ENCODE measurements at regions of chr16 and their contacts with region 1.

Region 1: DNA sequence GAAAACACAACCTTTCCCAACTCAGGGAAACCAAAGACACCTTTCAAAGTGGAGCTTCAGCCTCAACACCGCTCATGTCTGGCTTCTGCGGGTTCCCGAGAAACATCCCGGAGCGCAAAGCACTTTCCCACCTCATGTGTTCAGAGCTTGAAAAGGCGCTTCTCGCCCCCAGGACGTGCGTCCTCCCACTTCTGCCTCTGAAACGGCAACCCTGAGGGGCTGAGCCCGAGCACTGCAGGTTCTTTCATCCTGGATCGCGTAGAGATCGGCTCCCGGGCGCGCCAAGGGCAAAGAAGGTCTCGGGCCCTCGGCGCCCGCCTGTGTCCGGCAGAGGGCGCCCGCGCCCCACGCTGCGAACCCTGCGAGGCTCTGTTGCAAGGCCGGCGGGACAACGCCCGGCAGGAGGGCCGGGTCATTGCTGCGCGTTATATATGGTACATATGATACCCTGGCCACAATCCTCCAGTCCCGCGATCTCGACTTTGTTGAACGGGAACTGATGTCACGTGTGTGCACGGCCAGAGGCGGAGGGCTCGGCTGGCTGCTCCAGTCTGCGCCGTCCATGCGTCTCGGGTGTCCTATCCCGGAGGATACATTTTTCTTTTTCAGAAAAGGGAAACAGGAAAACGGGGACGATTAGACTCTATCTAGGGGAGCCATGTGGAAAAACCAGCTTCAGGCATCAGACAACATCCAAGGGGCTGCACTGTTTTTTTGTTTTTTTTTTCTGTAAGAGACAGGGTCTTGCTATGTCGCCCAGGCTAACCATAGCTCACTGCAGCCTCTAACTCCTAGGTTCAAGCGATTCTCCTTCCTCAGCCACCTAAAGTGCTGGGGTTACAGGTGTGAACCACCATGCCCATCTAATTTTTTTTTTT is 19.1 kb downstream of the COQ7 start:
- DNase-seq: peak; percentile 92
- H3K4me3 ChIP-seq: peak overlapping the region; percentile 41 to 57
- H3K27ac ChIP-seq: no peak overlapping the region
- H3K4me1 ChIP-seq: peaks cover 6 to 8% of the 10 kb centered on the region in 2 experiments; a peak in 2 of 4 replicates
- H3K27me3 ChIP-seq: no peaks in the 10 kb centered on the region
- CTCF ChIP-seq: peak; percentile 95
- EP300 ChIP-seq: no peak
- RAD21 ChIP-seq: peak; percentile 97

Region 2: GRCh38 chr16:18983565-18984424 is 102.8 kb before region 1 on chr16 and contains the start of gene TMC7:
- CTCF ChIA-PET with region 1: interaction called, 21 read pairs
- POLR2A ChIA-PET with region 1: no interaction called
- DNase-seq: peak; percentile 94
- H3K4me3 ChIP-seq: peak within 1 kb of the TSS; percentile 61 to 77
- H3K27ac ChIP-seq: peak within 1 kb of the TSS; percentile 24 to 33; a peak in 2 of 4 replicates
- H3K4me1 ChIP-seq: peaks cover 0 to 3% of the 10 kb centered on the region in 2 experiments; a peak in 1 of 4 replicates
- H3K27me3 ChIP-seq: no peaks in the 10 kb centered on the region
- CTCF ChIP-seq: peak; percentile 87
- EP300 ChIP-seq: no peak
- RAD21 ChIP-seq: peak; percentile 77
- polyA plus RNA-seq, gene TMC7: 0.66 and 0.93 TPM in 2 replicates

Region 3: GRCh38 chr16:19075511-19075910 is 11.1 kb before region 1 on chr16:
- CTCF ChIA-PET with region 1: interaction called, 16 read pairs
- POLR2A ChIA-PET with region 1: no interaction called
- DNase-seq: no peak
- H3K4me3 ChIP-seq: no peak overlapping the region
- H3K27ac ChIP-seq: no peak overlapping the region
- H3K4me1 ChIP-seq: no peaks in the 10 kb centered on the region
- H3K27me3 ChIP-seq: no peaks in the 10 kb centered on the region
- CTCF ChIP-seq: no peak
- EP300 ChIP-seq: no peak
- RAD21 ChIP-seq: no peak

Region 4: GRCh38 chr16:19113453-19114351 is 27.1 kb after region 1 on chr16 and contains the start of gene ITPRIPL2:
- CTCF ChIA-PET with region 1: interaction called, 35 read pairs
- POLR2A ChIA-PET with region 1: no interaction called
- DNase-seq: peak; percentile 92
- H3K4me3 ChIP-seq: peak within 1 kb of the TSS; percentile 68 to 76
- H3K27ac ChIP-seq: peak within 1 kb of the TSS; percentile 64 to 78
- H3K4me1 ChIP-seq: peaks cover 13 to 34% of the 10 kb centered on the region in 2 experiments; a peak in 3 of 4 replicates
- H3K27me3 ChIP-seq: no peaks in the 10 kb centered on the region
- CTCF ChIP-seq: no peak
- EP300 ChIP-seq: no peak
- RAD21 ChIP-seq: no peak
- polyA plus RNA-seq, gene ITPRIPL2: 4.3 and 4.7 TPM in 2 replicates

Region 5: GRCh38 chr16:19167710-19168370 is 81.3 kb after region 1 on chr16 and contains the start of gene SYT17:
- CTCF ChIA-PET with region 1: interaction called, 31 read pairs
- POLR2A ChIA-PET with region 1: no interaction called
- DNase-seq: peak; percentile 93
- H3K4me3 ChIP-seq: peak within 1 kb of the TSS; percentile 50 to 56
- H3K27ac ChIP-seq: peak within 1 kb of the TSS in 1 of 2 experiments; percentile 62; a peak in 1 of 4 replicates
- H3K4me1 ChIP-seq: peaks cover 0 to 7% of the 10 kb centered on the region in 2 experiments; a peak in 1 of 4 replicates
- H3K27me3 ChIP-seq: peaks cover 15% of the 10 kb centered on the region
- CTCF ChIP-seq: peak; percentile 60
- EP300 ChIP-seq: no peak
- RAD21 ChIP-seq: peak; percentile 70
- polyA plus RNA-seq, gene SYT17: 0.21 and 0.39 TPM in 2 replicates

Region 6: GRCh38 chr16:19213890-19214289 is 127.3 kb after region 1 on chr16:
- CTCF ChIA-PET with region 1: no interaction called
- POLR2A ChIA-PET with region 1: no interaction called
- DNase-seq: no peak
- H3K4me3 ChIP-seq: no peak overlapping the region
- H3K27ac ChIP-seq: no peak overlapping the region
- H3K4me1 ChIP-seq: no peaks in the 10 kb centered on the region
- H3K27me3 ChIP-seq: no peaks in the 10 kb centered on the region
- CTCF ChIP-seq: no peak
- EP300 ChIP-seq: no peak
- RAD21 ChIP-seq: peak; percentile 30

Region 7: DNA sequence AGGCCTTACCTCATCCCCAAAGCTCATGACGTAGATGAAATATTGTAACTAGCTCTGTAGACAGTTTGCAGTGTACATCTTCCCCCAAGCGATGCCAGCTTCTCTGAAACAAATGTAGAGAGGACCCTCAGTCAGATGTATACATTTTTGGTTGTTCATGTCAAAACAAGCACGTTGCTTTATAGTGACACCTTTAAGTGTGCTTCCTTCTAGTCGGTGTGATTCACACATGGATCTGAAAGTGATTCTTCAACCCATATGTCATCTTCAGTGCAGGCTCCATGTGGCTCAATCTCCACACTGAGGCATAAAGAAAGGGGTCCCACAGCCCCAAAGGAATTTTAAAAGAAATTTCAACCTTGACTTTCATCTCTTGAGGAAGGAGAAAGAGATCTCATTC is 168.1 kb after region 1 on chr16:
- CTCF ChIA-PET with region 1: no interaction called
- POLR2A ChIA-PET with region 1: no interaction called
- DNase-seq: no peak
- H3K4me3 ChIP-seq: no peak overlapping the region
- H3K27ac ChIP-seq: no peak overlapping the region
- H3K4me1 ChIP-seq: no peaks in the 10 kb centered on the region; a peak in 1 of 4 replicates
- H3K27me3 ChIP-seq: no peaks in the 10 kb centered on the region
- CTCF ChIP-seq: no peak
- EP300 ChIP-seq: no peak
- RAD21 ChIP-seq: no peak

Region 8: GRCh38 chr16:19375561-19376158 is 289.1 kb after region 1 on chr16:
- CTCF ChIA-PET with region 1: interaction called, 36 read pairs
- POLR2A ChIA-PET with region 1: interaction called, 3 read pairs
- DNase-seq: peak; percentile 77
- H3K4me3 ChIP-seq: peak overlapping the region in 1 of 2 experiments; percentile 51; a peak in 1 of 4 replicates
- H3K27ac ChIP-seq: no peak overlapping the region
- H3K4me1 ChIP-seq: no peaks in the 10 kb centered on the region
- H3K27me3 ChIP-seq: no peaks in the 10 kb centered on the region; the same call in 1 of the 2 replicates
- CTCF ChIP-seq: peak; percentile 89
- EP300 ChIP-seq: no peak
- RAD21 ChIP-seq: peak; percentile 99

Region 9: DNA sequence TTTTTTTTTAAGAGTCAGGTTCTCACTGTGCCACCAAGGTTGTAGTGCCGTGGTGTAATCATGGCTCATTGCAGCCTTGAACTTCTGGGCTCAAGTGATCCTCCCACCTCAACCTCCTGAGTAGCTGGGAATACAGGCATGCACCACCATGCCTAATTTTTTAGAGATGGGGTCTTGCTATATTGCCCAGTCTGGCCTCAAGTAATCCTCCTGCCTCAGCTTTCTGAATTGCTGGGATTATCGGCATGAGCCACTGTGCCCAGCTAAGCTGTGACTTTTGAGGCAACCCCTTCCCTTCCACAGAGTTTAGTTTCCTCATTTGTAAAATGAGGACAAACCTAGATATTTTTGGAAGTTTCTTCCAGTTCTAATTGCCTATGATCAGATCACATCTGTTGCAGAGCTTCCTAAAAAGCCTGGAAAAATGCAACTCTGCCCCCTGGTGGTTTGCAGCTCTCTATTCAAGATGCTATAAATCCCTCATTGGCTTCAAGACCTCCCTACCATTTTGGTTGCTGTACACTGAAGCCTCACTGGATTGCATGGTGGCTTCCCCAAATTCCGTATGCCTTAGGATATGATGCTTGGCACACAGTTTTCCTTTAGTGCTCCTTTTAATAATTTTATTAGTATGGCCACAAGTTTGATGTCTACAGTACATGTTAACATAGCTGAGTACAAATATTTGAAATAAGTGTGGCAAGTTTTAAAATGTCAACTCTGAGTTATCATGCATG is 416.0 kb after region 1 on chr16:
- CTCF ChIA-PET with region 1: interaction called, 82 read pairs
- POLR2A ChIA-PET with region 1: no interaction called
- DNase-seq: peak; percentile 66
- H3K4me3 ChIP-seq: no peak overlapping the region
- H3K27ac ChIP-seq: no peak overlapping the region
- H3K4me1 ChIP-seq: no peaks in the 10 kb centered on the region
- H3K27me3 ChIP-seq: no peaks in the 10 kb centered on the region
- CTCF ChIP-seq: peak; percentile 81
- EP300 ChIP-seq: no peak
- RAD21 ChIP-seq: peak; percentile 78